ENCODE measurements at regions of chr19 and their contacts with region 1.

Region 1: DNA sequence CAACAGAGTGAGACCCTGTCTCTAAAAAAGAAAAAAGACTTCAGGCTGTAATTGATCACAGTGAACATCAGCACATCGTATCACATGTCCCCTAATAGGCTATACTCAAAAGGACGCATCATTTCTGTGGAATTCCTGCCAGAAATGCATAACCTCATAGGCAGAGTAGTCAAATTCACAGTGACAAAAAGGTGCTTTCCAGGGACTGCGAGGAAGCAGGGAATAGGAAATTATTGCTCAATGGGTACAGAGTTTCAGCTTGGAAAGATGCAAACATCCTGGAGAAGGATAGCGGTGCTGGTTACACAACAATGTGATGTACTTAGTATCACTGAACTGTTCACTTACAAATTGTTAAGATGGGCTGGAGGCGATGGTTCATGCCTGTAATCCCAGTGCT is 41.1 kb upstream of the MRI1 start:
- DNase-seq: no peak
- H3K4me3 ChIP-seq: no peak overlapping the region
- H3K27ac ChIP-seq: no peak overlapping the region
- H3K4me1 ChIP-seq: no peaks in the 10 kb centered on the region
- H3K27me3 ChIP-seq: no peaks in the 10 kb centered on the region
- CTCF ChIP-seq: no peak
- POLR2A ChIP-seq: no peak

Region 2: GRCh38 chr19:13597640-13598039 is 125.6 kb before region 1 on chr19:
- intact Hi-C with region 1: loop called (anchors 5 kb)
- DNase-seq: peak; percentile 29 to 33
- H3K4me3 ChIP-seq: no peak overlapping the region
- H3K27ac ChIP-seq: no peak overlapping the region
- H3K4me1 ChIP-seq: no peaks in the 10 kb centered on the region
- H3K27me3 ChIP-seq: no peaks in the 10 kb centered on the region
- CTCF ChIP-seq: peak in 4 of 6 experiments; percentile 46 to 69 (median 64)
- POLR2A ChIP-seq: no peak

Measured in thyroid gland (tissue), 4 donors.